ENCODE measurements at regions of chr1 and their contacts with region 1.

Region 1: GRCh38 chr1:180062452-180062975 is 92.2 kb upstream of the QSOX1 start:
- DNase-seq: no peak
- ATAC-seq: no peak

Region 2: DNA sequence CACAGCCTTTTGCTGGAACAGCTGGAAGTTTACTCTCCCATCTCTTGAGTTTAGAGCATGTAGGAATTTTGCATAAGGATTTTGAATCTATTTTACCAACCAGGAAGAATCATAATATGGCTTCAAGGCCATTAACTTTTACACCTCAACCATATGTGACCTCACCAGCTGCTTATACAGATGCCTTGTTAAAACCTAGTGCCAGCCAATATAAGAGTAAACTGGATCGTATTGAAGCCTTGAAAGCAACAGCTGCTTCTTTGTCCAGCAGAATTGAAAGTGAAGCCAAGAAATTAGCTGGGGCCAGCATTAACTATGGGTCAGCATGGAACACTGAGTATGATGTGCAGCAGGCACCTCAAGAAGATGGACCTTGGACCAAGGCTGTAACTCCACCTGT is 42.5 kb before region 1 on chr1:
- intact Hi-C with region 1: loop called (anchors 10 kb)
- DNase-seq: no peak
- ATAC-seq: no peak

Measured in left ventricle myocardium superior (tissue), 1 donor.